Activated naive CD4-positive, alpha-beta T cell treated with anti-CD3 and anti-CD28 coated beads for 36 hours (primary cell): ENCODE measurements at regions of chr1 and their contacts with region 1.

Region 1: GRCh38 chr1:18902523-18903290 is at the start of gene ALDH4A1:
- DNase-seq: peak; percentile 97
- H3K4me3 Mint-ChIP-seq: peak within 1 kb of the TSS; percentile 91
- H3K27ac Mint-ChIP-seq: peak within 1 kb of the TSS; percentile 96
- H3K4me1 Mint-ChIP-seq: peaks cover 30% of the 10 kb centered on the region
- H3K27me3 Mint-ChIP-seq: no peaks in the 10 kb centered on the region
- total RNA-seq, gene ALDH4A1: 11.6 to 12.5 TPM

Region 2: GRCh38 chr1:18805925-18806849 is 96.5 kb before region 1 on chr1:
- CTCF ChIA-PET with region 1: no interaction called
- intact Hi-C with region 1: no loop called
- DNase-seq: no peak
- H3K4me3 Mint-ChIP-seq: no peak overlapping the region
- H3K27ac Mint-ChIP-seq: no peak overlapping the region
- H3K4me1 Mint-ChIP-seq: no peaks in the 10 kb centered on the region
- H3K27me3 Mint-ChIP-seq: peaks cover 12% of the 10 kb centered on the region

Region 3: DNA sequence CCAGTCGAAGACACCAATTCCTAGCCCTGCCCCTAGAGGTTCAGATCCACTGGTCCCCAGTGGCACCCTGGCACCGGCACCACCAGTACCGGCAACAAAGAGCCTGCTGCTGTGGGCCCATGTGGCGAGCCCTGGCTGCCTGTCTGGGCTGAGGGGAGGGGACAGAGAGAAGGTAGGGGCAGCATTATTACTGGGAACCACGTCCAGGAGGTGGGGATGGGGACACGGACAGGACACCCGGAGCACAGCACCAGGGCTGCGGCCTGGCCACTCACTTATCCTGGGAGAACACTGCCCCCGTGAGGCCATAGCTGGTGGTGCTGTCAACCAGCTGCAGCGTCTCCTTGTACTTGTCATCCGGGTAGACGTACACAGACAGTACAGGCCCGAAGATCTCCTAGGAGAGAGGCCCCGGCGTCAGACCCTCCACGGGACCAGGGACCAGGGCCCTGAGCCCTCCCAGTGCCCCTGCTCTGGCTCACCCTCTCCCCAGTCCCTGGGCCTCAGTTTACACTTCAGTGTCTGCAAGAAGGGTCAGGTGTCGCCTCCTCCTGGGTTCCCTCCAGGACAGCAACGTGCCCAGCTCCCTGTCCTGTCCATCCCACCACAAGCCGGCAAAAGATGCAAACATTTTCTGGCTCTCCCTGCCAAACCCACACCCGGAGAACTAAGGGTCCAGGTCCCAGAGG is 27.5 kb before region 1 on chr1:
- CTCF ChIA-PET with region 1: no interaction called
- intact Hi-C with region 1: no loop called
- DNase-seq: peak; percentile 85
- H3K4me3 Mint-ChIP-seq: no peak overlapping the region
- H3K27ac Mint-ChIP-seq: no peak overlapping the region
- H3K4me1 Mint-ChIP-seq: no peaks in the 10 kb centered on the region
- H3K27me3 Mint-ChIP-seq: no peaks in the 10 kb centered on the region

Region 4: GRCh38 chr1:18926315-18927081 is 23.8 kb after region 1 on chr1:
- CTCF ChIA-PET with region 1: interaction called, 19 read pairs
- intact Hi-C with region 1: loop called (anchors 2 kb)
- DNase-seq: peak; percentile 95
- H3K4me3 Mint-ChIP-seq: peak overlapping the region; percentile 80
- H3K27ac Mint-ChIP-seq: peak overlapping the region; percentile 99
- H3K4me1 Mint-ChIP-seq: peaks cover 74% of the 10 kb centered on the region
- H3K27me3 Mint-ChIP-seq: no peaks in the 10 kb centered on the region

Region 5: DNA sequence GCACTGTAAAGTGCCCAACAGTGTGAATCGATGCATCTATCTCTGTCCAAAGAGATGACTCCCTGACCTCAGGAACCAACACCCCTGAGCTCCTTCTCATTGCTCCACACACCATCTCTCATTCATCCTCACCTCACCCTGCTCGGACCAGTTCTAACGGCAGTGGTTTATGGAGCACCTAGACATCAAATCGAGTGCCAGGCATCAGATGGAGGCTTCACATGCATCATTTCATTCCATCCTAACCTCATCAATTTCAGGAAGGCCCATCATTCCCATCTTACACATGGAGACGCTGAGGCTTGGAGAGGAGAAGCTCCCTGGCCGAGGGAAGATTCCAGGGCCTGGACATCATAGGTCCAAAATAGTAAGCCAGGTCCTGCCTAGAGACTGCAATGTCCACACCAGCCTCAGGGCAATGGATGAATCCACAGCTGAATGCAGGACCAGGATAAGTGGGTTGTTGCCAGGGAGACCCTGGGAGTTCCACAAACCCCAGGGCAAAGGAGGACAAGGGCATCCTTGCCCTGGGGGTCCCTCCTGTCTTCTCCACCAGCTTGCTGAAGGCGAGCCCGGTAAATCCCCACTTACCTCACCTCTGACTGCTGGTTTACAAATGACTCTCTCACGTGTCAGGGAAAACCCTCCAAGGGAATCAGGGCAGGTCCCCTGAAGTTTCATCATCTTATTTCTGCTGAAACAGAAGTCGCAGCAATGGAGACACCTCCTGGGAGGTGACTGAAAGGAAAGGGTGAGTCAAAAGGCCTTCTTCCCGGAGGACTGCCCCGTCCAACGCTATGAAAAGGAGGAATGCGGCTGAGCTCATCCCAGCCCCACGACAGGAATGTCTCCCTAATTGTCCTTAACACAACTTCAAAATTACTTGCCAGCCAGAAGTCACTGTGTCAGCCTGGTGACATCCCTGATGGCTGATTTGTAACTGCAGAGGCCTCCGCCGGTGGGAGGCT is 62.8 kb after region 1 on chr1:
- CTCF ChIA-PET with region 1: interaction called, 21 read pairs
- intact Hi-C with region 1: loop called (anchors 2 kb)
- DNase-seq: peak; percentile 86
- H3K4me3 Mint-ChIP-seq: no peak overlapping the region
- H3K27ac Mint-ChIP-seq: peak overlapping the region; percentile 77
- H3K4me1 Mint-ChIP-seq: peaks cover 12% of the 10 kb centered on the region
- H3K27me3 Mint-ChIP-seq: no peaks in the 10 kb centered on the region

Region 6: GRCh38 chr1:19010995-19011844 is 108.5 kb after region 1 on chr1:
- CTCF ChIA-PET with region 1: no interaction called
- intact Hi-C with region 1: loop called (anchors 2 kb)
- DNase-seq: peak; percentile 95
- H3K4me3 Mint-ChIP-seq: no peak overlapping the region
- H3K27ac Mint-ChIP-seq: peak overlapping the region; percentile 83
- H3K4me1 Mint-ChIP-seq: peaks cover 35% of the 10 kb centered on the region
- H3K27me3 Mint-ChIP-seq: no peaks in the 10 kb centered on the region

Region 7: GRCh38 chr1:19096036-19096833 is 193.5 kb after region 1 on chr1:
- CTCF ChIA-PET with region 1: interaction called, 6 read pairs
- intact Hi-C with region 1: loop called (anchors 5 kb)
- DNase-seq: peak; percentile 35
- H3K4me3 Mint-ChIP-seq: no peak overlapping the region
- H3K27ac Mint-ChIP-seq: no peak overlapping the region
- H3K4me1 Mint-ChIP-seq: no peaks in the 10 kb centered on the region
- H3K27me3 Mint-ChIP-seq: no peaks in the 10 kb centered on the region

Region 8: GRCh38 chr1:19240673-19241538 is 338.2 kb after region 1 on chr1:
- CTCF ChIA-PET with region 1: interaction called, 5 read pairs
- intact Hi-C with region 1: loop called (anchors 1 kb)
- DNase-seq: peak; percentile 85
- H3K4me3 Mint-ChIP-seq: no peak overlapping the region
- H3K27ac Mint-ChIP-seq: peak overlapping the region; percentile 61
- H3K4me1 Mint-ChIP-seq: no peaks in the 10 kb centered on the region
- H3K27me3 Mint-ChIP-seq: no peaks in the 10 kb centered on the region